Caco-2 (cell line): ENCODE measurements at regions of chr16 and their contacts with region 1.

Region 1: GRCh38 chr16:30922960-30923535 is 324 bp upstream of the FBXL19 start:
- DNase-seq: peak; percentile 97 to 99
- H3K4me3 ChIP-seq: peak overlapping the region; percentile 49
- H3K4me3 Mint-ChIP-seq: peak overlapping the region; percentile 100
- H3K27ac Mint-ChIP-seq: peak overlapping the region; percentile 100
- H3K4me1 ChIP-seq: no peaks in the 10 kb centered on the region
- H3K4me1 Mint-ChIP-seq: no peaks in the 10 kb centered on the region
- H3K27me3 ChIP-seq: no peaks in the 10 kb centered on the region
- H3K27me3 Mint-ChIP-seq: no peaks in the 10 kb centered on the region
- CTCF ChIP-seq: no peak

Region 2: DNA sequence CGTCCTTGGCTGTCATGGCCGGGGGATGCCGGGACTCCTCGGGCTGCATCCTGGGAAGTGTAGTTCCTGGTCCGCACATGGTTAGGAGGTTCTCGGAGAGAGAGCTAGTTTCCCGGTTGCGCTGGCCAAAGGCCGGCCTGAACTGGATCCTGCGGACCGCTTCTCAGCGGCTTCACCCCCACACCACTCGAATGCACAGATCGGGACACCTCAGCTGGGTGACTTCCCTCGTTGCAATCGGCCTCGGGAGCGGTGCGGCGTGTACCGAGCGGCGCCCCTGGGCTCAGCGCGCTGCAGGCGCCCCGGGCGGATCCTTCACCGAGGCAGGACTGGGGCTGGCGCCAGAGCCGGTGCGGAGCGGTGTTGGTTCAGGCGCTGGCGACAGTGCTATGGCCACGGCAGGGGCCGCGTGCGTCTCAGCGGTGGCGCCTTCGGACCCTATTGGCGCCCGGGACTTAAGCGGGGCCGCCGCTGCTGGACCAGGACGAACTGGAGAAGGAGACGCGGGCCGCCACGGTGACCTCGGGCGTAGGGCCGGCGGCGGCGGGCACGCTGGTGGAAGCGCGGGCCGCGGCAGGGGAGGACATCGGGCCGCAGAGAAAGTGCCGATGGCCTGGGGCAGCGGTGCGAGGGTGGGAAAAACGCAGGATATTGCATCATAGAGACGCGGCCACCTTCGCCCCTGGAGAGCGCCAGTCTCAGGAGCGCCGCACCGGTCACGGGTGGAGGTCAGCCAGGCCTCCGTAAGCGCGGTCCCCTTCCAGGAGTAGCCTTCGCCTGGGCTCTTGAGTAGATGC is 147.5 kb before region 1 on chr16:
- CTCF ChIA-PET with region 1: no interaction called
- POLR2A ChIA-PET with region 1: no interaction called
- intact Hi-C with region 1: loop called (anchors 1 kb)
- DNase-seq: peak; percentile 86 to 87
- H3K4me3 ChIP-seq: peak overlapping the region; percentile 70
- H3K4me3 Mint-ChIP-seq: peak overlapping the region; percentile 75
- H3K27ac Mint-ChIP-seq: peak overlapping the region; percentile 91
- H3K4me1 ChIP-seq: peaks cover 12% of the 10 kb centered on the region
- H3K4me1 Mint-ChIP-seq: peaks cover 10% of the 10 kb centered on the region
- H3K27me3 ChIP-seq: no peaks in the 10 kb centered on the region
- H3K27me3 Mint-ChIP-seq: no peaks in the 10 kb centered on the region
- CTCF ChIP-seq: no peak

Region 3: DNA sequence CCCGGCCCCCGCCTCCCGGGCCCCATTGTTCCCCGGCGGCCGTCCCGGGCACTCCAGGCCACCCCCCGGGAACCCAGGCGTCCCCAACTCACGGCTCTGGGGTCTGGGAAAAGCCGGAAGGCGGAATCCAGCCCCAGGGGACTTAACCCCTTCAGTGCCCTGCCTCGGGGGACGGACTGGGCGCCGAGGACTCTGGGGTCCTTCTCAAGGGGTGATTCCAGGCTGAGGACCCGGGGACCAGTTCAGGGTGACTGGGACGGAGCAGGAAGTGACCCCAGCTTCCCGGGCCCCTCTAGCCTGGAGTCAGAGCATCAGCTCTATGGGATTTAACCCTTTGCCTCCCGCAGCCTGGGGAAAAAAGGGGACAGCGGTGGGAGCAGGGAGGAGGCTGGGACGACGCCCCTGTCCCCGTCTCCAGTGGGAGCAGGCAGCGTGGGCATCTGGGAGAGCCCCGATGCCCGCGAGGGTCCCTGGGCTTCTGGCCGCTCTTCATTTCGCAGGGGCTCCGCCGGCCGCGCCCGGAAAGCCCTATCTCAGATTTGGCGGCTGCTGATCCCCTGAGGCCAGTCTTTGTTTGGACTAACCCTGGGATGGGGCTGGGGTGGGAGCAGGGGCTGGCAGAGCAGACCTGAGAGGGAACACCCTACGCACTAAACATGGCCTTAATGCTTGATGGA is 136.0 kb before region 1 on chr16 and contains the start of gene ZNF629:
- CTCF ChIA-PET with region 1: no interaction called
- POLR2A ChIA-PET with region 1: no interaction called
- intact Hi-C with region 1: no loop called
- DNase-seq: peak; percentile 79 to 82
- H3K4me3 ChIP-seq: peak within 1 kb of the TSS; percentile 72
- H3K4me3 Mint-ChIP-seq: peak within 1 kb of the TSS; percentile 93
- H3K27ac Mint-ChIP-seq: peak within 1 kb of the TSS; percentile 91
- H3K4me1 ChIP-seq: peaks cover 14% of the 10 kb centered on the region; the same call in 1 of the 2 replicates
- H3K4me1 Mint-ChIP-seq: no peaks in the 10 kb centered on the region
- H3K27me3 ChIP-seq: no peaks in the 10 kb centered on the region
- H3K27me3 Mint-ChIP-seq: no peaks in the 10 kb centered on the region
- CTCF ChIP-seq: no peak
- total RNA-seq, gene ZNF629: 18.9 and 20.6 TPM in 2 replicates

Region 4: DNA sequence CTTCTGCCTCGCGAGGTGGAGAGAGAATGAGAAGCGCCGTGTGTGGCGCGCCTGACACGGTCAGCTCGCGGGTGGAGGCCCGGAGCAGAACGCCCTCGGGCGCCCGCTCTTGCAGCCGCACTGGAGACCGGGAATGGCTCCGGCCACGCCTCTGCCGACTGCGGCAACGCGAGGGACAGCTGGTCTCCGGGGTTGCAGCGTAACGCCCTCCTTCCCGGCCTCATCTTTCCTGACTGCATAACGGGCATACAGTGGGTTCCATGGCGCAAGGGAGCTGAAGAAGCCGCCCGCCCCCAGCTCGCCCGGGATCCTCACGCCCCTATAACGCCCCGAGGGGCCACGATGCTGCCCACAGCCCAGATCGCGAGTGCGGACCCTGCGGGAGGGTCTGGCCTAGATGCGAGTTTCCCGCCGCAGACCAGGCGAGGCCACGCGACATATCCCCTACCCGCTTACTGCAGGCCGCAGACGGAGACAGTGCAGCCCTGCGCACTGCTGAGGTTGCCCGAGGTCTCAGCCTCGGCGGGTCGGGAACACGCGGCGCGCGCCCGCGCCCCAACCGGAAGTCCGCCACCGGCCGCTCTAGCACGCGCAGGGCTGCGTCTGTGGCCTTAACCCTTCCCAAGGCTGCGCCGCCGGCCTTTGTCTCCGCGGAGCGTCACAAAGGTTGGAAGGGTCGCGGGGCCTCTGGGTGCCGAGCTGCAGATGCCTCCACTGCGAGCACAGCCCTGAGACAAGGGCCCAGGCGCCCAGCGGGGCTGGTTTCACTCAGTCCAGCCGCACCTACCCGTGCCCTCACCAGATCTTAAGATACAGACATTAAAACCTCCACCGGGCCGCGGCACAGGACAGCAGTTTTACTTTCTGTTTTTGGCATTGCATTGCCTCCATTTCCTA is 48.0 kb before region 1 on chr16:
- CTCF ChIA-PET with region 1: no interaction called
- POLR2A ChIA-PET with region 1: no interaction called
- intact Hi-C with region 1: no loop called
- DNase-seq: peak; percentile 91 to 92
- H3K4me3 ChIP-seq: peak overlapping the region; percentile 98
- H3K4me3 Mint-ChIP-seq: peak overlapping the region; percentile 89
- H3K27ac Mint-ChIP-seq: peak overlapping the region; percentile 86
- H3K4me1 ChIP-seq: peaks cover 9% of the 10 kb centered on the region
- H3K4me1 Mint-ChIP-seq: peaks cover 12% of the 10 kb centered on the region
- H3K27me3 ChIP-seq: no peaks in the 10 kb centered on the region
- H3K27me3 Mint-ChIP-seq: no peaks in the 10 kb centered on the region
- CTCF ChIP-seq: no peak

Region 5: GRCh38 chr16:30896889-30897733 is 25.9 kb before region 1 on chr16:
- CTCF ChIA-PET with region 1: no interaction called
- POLR2A ChIA-PET with region 1: no interaction called
- intact Hi-C with region 1: loop called (anchors 1 kb)
- DNase-seq: peak; percentile 57 to 58
- H3K4me3 ChIP-seq: peak overlapping the region; percentile 41
- H3K4me3 Mint-ChIP-seq: peak overlapping the region; percentile 90
- H3K27ac Mint-ChIP-seq: peak overlapping the region; percentile 83
- H3K4me1 ChIP-seq: peaks cover 30% of the 10 kb centered on the region
- H3K4me1 Mint-ChIP-seq: peaks cover 23% of the 10 kb centered on the region
- H3K27me3 ChIP-seq: no peaks in the 10 kb centered on the region
- H3K27me3 Mint-ChIP-seq: no peaks in the 10 kb centered on the region
- CTCF ChIP-seq: no peak

Region 6: GRCh38 chr16:30941600-30942425 is 18.8 kb after region 1 on chr16:
- CTCF ChIA-PET with region 1: interaction called, 17 read pairs
- POLR2A ChIA-PET with region 1: interaction called, 3 read pairs
- intact Hi-C with region 1: no loop called
- DNase-seq: peak; percentile 70 to 82
- H3K4me3 ChIP-seq: no peak overlapping the region
- H3K4me3 Mint-ChIP-seq: no peak overlapping the region
- H3K27ac Mint-ChIP-seq: no peak overlapping the region
- H3K4me1 ChIP-seq: peaks cover 7% of the 10 kb centered on the region; the same call in 1 of the 2 replicates
- H3K4me1 Mint-ChIP-seq: no peaks in the 10 kb centered on the region
- H3K27me3 ChIP-seq: no peaks in the 10 kb centered on the region
- H3K27me3 Mint-ChIP-seq: no peaks in the 10 kb centered on the region
- CTCF ChIP-seq: peak; percentile 80 to 91

Region 7: DNA sequence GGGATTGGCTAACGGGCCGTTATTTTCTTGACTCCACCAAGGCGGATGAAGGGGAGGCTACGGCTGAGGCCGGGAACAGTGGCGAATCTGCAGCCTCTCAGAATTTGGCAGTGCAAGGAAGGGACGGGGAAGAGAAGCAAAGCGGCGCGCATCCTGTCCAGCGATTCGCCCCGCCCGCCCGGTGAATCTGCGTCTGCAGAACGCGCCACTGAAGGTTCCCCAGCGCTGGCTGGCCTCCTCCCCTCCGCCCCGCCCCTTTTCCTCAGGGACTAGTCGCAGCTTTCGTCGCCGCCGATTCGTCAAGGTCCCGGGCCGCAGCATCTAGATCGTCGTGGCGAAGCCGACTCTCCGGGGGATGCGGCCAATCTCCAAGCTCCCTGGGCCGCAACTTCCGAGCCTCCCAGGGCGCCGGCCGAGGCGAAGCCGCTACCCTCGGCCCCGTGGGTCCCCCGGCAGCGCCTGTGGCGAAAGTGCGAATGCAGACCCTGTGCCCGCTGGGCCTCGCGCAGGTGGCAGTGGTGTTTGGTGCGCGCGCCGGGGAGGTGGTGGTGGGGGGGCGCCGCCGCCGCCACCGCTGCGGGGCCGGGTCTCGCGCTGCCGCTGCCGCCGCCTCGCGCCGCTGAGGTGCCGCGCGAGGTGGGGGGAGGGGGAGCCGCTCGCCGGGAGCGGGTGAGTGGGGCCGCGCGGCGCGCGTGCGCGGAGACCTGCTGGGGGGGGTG is 34.6 kb after region 1 on chr16 and contains the start of gene SETD1A:
- CTCF ChIA-PET with region 1: no interaction called
- POLR2A ChIA-PET with region 1: no interaction called
- intact Hi-C with region 1: no loop called
- DNase-seq: peak; percentile 93 to 94
- H3K4me3 ChIP-seq: peak within 1 kb of the TSS; percentile 95
- H3K4me3 Mint-ChIP-seq: peak within 1 kb of the TSS; percentile 87
- H3K27ac Mint-ChIP-seq: peak within 1 kb of the TSS; percentile 95
- H3K4me1 ChIP-seq: no peaks in the 10 kb centered on the region; the same call in 1 of the 2 replicates
- H3K4me1 Mint-ChIP-seq: peaks cover 13% of the 10 kb centered on the region
- H3K27me3 ChIP-seq: no peaks in the 10 kb centered on the region
- H3K27me3 Mint-ChIP-seq: no peaks in the 10 kb centered on the region
- CTCF ChIP-seq: no peak
- total RNA-seq, gene SETD1A: 21.5 and 26.3 TPM in 2 replicates